Common myeloid progenitor, CD34-positive (primary cell): ENCODE measurements at regions of chr3 and their contacts with region 1.

Region 1: DNA sequence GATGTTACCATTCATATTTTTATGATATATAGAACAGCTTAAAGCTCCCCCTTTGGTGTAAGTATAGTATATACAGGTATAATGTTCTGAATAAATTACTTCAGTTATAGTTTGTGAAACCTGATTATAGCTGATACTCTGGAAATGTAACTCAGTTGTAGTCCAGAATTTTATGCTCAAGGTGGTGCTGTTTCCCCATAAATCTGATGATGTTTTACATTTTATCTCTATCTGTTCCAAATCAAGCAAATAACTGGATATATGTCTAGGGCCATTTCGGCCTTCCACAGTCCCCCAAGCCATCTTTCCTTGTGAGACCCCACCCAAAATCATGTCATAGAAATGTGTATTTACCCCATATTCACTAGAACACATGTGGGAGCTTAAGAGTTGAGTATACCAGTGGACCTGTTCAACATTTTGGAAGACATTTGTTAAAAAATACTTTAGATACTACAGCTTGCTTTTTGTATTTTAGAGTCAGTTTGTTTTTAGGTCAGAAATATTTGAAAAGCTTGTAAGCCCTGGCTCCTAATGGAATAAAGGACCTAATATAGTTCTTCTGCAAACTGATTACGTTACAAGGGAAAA is 107.1 kb downstream of the ATG7 start:
- DNase-seq: peak; percentile 50 to 76 (median 71)
- H3K4me3 ChIP-seq: no peak overlapping the region
- H3K27ac ChIP-seq: no peak overlapping the region
- H3K4me1 ChIP-seq: no peaks in the 10 kb centered on the region
- H3K27me3 ChIP-seq: no peaks in the 10 kb centered on the region

Region 2: GRCh38 chr3:11651900-11652299 is 272.6 kb after region 1 on chr3:
- CTCF ChIA-PET with region 1: interaction called, 170 read pairs
- POLR2A ChIA-PET with region 1: interaction called, 4 read pairs
- DNase-seq: peak in 2 of 3 donors; percentile 68 to 76
- H3K4me3 ChIP-seq: no peak overlapping the region
- H3K27ac ChIP-seq: no peak overlapping the region
- H3K4me1 ChIP-seq: peaks cover 5 to 30% (median 25%) of the 10 kb centered on the region in 4 experiments
- H3K27me3 ChIP-seq: no peaks in the 10 kb centered on the region

Region 3: DNA sequence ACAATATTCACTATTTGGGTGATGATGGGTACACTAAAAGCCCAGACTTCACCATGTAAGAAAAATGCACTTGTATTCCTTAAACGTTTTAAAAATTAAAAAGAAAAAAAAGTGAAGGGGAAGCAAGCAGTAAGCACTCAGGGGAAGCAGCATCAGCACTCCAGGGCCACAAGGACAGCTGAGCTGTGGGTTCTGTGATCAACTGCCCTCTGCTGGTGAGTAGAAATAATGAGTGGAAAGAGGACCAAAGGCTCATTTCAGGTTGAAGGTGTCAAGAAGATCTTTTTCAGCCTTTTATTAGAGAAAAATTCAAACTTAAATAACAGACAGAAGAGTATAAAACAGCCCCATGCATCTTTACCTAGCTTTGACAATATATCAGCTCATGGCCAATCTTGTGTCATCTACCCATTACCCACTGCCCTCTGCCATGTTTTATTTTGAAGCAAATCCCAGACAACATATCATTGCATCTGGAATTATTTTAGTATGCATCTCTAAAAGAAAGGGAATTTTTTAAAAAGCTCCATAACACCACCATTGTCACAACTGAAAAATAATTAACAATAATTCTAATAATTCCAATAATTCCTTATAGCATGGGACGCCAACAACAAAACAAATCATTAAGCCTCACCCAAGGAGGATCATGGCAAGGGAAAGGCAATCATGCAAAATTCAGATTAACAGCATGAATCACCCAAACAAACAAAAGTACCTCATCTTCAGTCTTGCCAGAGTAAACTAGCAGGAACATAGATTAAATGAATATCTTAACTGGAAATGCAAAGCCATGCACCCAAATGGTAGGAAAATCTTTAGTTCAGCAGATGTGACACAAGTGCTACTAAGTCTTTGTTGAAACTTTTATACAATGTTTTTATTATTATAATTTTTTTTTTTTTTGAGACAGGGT is 424.9 kb after region 1 on chr3:
- CTCF ChIA-PET with region 1: interaction called, 53 read pairs
- POLR2A ChIA-PET with region 1: no interaction called
- DNase-seq: peak; percentile 59 to 85 (median 84)
- H3K4me3 ChIP-seq: no peak overlapping the region
- H3K27ac ChIP-seq: no peak overlapping the region
- H3K4me1 ChIP-seq: no peaks in the 10 kb centered on the region
- H3K27me3 ChIP-seq: no peaks in the 10 kb centered on the region

Region 4: DNA sequence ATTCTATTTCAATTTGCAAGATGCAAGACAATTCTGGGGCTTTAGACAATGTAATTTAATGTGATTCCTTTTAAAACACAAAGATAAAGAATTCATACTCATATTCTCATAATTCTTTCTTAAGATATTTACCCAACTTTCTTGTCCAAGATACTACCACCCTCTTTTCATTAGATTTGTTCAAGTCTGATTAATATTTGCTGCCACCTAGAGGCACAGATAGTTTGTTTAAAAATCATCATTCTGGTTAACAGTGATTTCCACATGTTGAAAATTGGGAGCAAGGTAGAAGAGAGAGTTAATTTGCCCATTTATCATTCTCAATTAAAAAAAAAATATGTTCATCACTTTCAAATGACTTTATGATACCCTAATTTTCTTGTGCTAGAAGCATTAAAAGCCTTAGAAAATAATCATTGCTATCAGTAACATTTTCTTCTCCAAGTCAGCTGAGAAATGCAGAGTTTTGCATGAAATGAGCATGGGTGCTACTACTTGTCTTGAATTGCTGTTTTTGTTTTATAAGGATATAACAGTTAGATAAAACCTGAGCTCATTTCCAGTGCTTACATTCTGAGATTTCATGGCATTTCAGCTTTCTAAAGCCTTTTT is 455.8 kb after region 1 on chr3:
- CTCF ChIA-PET with region 1: interaction called, 16 read pairs
- POLR2A ChIA-PET with region 1: no interaction called
- DNase-seq: peak; percentile 15 to 34 (median 24)
- H3K4me3 ChIP-seq: no peak overlapping the region
- H3K27ac ChIP-seq: no peak overlapping the region
- H3K4me1 ChIP-seq: no peaks in the 10 kb centered on the region
- H3K27me3 ChIP-seq: no peaks in the 10 kb centered on the region